ENCODE measurements at regions of chr3 and their contacts with region 1.

Region 1: GRCh38 chr3:42804106-42804830 is at the start of gene HIGD1A:
- DNase-seq: peak; percentile 82 to 93 (median 90)
- ATAC-seq: peak; percentile 100
- H3K4me3 ChIP-seq: peak within 1 kb of the TSS; percentile 91
- H3K4me3 Mint-ChIP-seq: peak within 1 kb of the TSS; percentile 93 to 99 (median 98)
- H3K27ac ChIP-seq: peak within 1 kb of the TSS; percentile 88
- H3K27ac Mint-ChIP-seq: peak within 1 kb of the TSS; percentile 84 to 97 (median 94)
- H3K4me1 ChIP-seq: peaks cover 9 to 16% of the 10 kb centered on the region in 2 donors
- H3K4me1 Mint-ChIP-seq: peaks cover 33 to 60% (median 44%) of the 10 kb centered on the region in 7 donors
- H3K27me3 ChIP-seq: no peaks in the 10 kb centered on the region
- H3K27me3 Mint-ChIP-seq: peaks cover 0 to 36% (median 4%) of the 10 kb centered on the region in 5 donors
- total RNA-seq, gene HIGD1A: 15.3 to 65.9 (median 23.6) TPM

Region 2: GRCh38 chr3:42581709-42582473 is 222.4 kb before region 1 on chr3 and contains the start of gene SEC22C:
- CTCF ChIA-PET with region 1: no interaction called
- POLR2A ChIA-PET with region 1: interaction called, 5 read pairs
- intact Hi-C with region 1: loop called in 1 of 2 experiments (anchors 5 kb)
- DNase-seq: peak; percentile 86 to 95 (median 94)
- ATAC-seq: peak; percentile 94
- H3K4me3 ChIP-seq: peak within 1 kb of the TSS; percentile 86
- H3K4me3 Mint-ChIP-seq: peak within 1 kb of the TSS; percentile 77 to 97 (median 94)
- H3K27ac ChIP-seq: peak within 1 kb of the TSS; percentile 92
- H3K27ac Mint-ChIP-seq: peak within 1 kb of the TSS; percentile 89 to 99 (median 96)
- H3K4me1 ChIP-seq: peaks cover 19 to 25% of the 10 kb centered on the region in 2 donors
- H3K4me1 Mint-ChIP-seq: peaks cover 31 to 60% (median 57%) of the 10 kb centered on the region in 7 donors
- H3K27me3 ChIP-seq: no peaks in the 10 kb centered on the region
- H3K27me3 Mint-ChIP-seq: no peaks in the 10 kb centered on the region
- total RNA-seq, gene SEC22C: 39.7 to 54.8 (median 51.3) TPM

Region 3: GRCh38 chr3:42772670-42773408 is 31.4 kb before region 1 on chr3 and contains the start of gene CCDC13:
- CTCF ChIA-PET with region 1: no interaction called
- POLR2A ChIA-PET with region 1: no interaction called
- intact Hi-C with region 1: loop called (anchors 1 kb)
- DNase-seq: peak; percentile 72 to 88 (median 75)
- ATAC-seq: peak; percentile 91
- H3K4me3 ChIP-seq: peak within 1 kb of the TSS; percentile 70
- H3K4me3 Mint-ChIP-seq: peak within 1 kb of the TSS; percentile 84 to 93 (median 90)
- H3K27ac ChIP-seq: no peak within 1 kb of the TSS
- H3K27ac Mint-ChIP-seq: peak within 1 kb of the TSS in 8 of 9 donors; percentile 13 to 93 (median 87)
- H3K4me1 ChIP-seq: peaks cover 5 to 6% of the 10 kb centered on the region in 2 donors
- H3K4me1 Mint-ChIP-seq: peaks cover 9 to 13% (median 12%) of the 10 kb centered on the region in 7 donors
- H3K27me3 ChIP-seq: no peaks in the 10 kb centered on the region
- H3K27me3 Mint-ChIP-seq: peaks cover 0 to 16% (median 0%) of the 10 kb centered on the region in 5 donors
- total RNA-seq, gene CCDC13: 0.34 to 1.5 (median 0.70) TPM

Region 4: DNA sequence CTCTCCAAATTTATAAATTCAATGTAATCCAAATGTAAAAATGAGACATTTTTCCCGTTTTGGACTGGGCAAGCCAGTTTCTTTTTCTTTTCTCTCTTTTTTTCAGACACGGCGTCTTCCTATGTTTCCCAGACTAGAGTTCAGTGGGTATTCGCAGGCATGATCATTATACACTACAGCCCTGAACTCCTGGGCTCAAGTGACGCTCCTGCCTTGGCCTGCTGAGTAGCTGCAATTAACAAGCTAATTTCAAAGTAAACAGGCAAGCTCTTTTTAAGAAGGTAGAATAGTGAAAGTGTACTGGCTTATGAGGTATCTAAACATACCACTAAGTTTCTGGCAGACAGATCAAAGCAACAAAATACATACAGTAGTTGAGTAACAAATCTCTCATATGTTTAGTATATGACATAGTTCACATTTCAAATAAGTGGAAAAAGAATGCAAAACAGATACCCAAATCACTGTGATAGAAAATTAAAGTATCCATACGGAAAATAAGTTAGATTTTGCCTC is 13.5 kb before region 1 on chr3:
- CTCF ChIA-PET with region 1: no interaction called
- POLR2A ChIA-PET with region 1: interaction called, 5 read pairs
- intact Hi-C with region 1: loop called in 1 of 2 experiments (anchors 2 kb)
- DNase-seq: no peak
- ATAC-seq: no peak
- H3K4me3 ChIP-seq: no peak overlapping the region
- H3K4me3 Mint-ChIP-seq: no peak overlapping the region
- H3K27ac ChIP-seq: no peak overlapping the region
- H3K27ac Mint-ChIP-seq: peak overlapping the region in 1 of 9 donors; percentile 41
- H3K4me1 ChIP-seq: no peaks in the 10 kb centered on the region
- H3K4me1 Mint-ChIP-seq: peaks cover 6 to 27% (median 15%) of the 10 kb centered on the region in 7 donors
- H3K27me3 ChIP-seq: no peaks in the 10 kb centered on the region
- H3K27me3 Mint-ChIP-seq: no peaks in the 10 kb centered on the region

Region 5: GRCh38 chr3:42839616-42840015 is 35.3 kb after region 1 on chr3:
- CTCF ChIA-PET with region 1: no interaction called
- POLR2A ChIA-PET with region 1: no interaction called
- intact Hi-C with region 1: loop called in 1 of 2 experiments (anchors 2 kb)
- DNase-seq: peak in 7 of 9 donors; percentile 19 to 58 (median 51)
- ATAC-seq: peak; percentile 96
- H3K4me3 ChIP-seq: no peak overlapping the region
- H3K4me3 Mint-ChIP-seq: no peak overlapping the region
- H3K27ac ChIP-seq: no peak overlapping the region
- H3K27ac Mint-ChIP-seq: no peak overlapping the region
- H3K4me1 ChIP-seq: no peaks in the 10 kb centered on the region
- H3K4me1 Mint-ChIP-seq: peaks cover 0 to 4% (median 0%) of the 10 kb centered on the region in 7 donors
- H3K27me3 ChIP-seq: no peaks in the 10 kb centered on the region
- H3K27me3 Mint-ChIP-seq: peaks cover 0 to 5% (median 3%) of the 10 kb centered on the region in 5 donors

Region 6: GRCh38 chr3:43132870-43133636 is 328.8 kb after region 1 on chr3:
- CTCF ChIA-PET with region 1: no interaction called
- POLR2A ChIA-PET with region 1: no interaction called
- intact Hi-C with region 1: no loop called
- DNase-seq: no peak
- ATAC-seq: no peak
- H3K4me3 ChIP-seq: no peak overlapping the region
- H3K4me3 Mint-ChIP-seq: no peak overlapping the region
- H3K27ac ChIP-seq: no peak overlapping the region
- H3K27ac Mint-ChIP-seq: no peak overlapping the region
- H3K4me1 ChIP-seq: no peaks in the 10 kb centered on the region
- H3K4me1 Mint-ChIP-seq: no peaks in the 10 kb centered on the region
- H3K27me3 ChIP-seq: no peaks in the 10 kb centered on the region
- H3K27me3 Mint-ChIP-seq: peaks cover 0 to 5% (median 0%) of the 10 kb centered on the region in 5 donors

Region 7: DNA sequence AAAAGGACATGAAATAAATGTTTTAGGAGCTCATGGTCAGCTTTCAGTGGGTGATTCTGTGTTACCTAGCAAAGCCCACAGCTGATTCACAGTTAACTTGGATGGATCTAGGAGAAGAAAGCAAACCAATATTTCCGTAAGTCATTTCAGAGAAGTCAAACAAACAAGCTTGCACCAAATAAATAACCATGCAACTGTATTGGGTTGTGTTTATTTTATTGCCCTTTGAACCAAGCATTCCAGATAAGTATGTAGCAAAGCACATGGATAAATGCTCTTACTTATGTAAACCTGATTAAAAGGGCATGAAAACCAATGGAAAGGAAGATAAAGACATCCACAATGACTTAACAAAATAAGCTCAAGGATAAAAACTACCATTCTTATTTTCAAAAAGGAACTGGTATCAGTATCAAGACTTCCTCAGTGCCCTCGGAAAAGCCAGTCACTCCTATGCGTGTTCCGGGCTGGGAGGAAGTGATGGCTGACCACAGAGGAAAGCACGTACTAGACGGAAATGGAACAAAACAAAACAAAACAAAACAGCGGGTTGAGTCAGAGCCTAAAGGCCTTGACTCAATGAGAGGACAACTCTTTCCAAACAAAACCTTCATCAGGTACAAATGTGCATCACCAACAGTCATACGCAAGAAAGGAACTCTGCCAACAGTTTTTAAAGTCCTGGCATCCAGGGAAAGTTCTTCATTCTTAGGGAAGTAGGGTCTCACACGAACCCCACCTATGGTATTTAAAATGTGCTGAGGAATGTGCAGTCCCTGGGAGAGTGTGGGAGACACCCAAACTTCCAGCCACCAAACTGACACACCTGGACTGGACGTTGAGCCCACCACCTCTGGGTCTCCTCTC is 585.4 kb after region 1 on chr3:
- CTCF ChIA-PET with region 1: no interaction called
- POLR2A ChIA-PET with region 1: no interaction called
- intact Hi-C with region 1: loop called in 1 of 2 experiments (anchors 10 kb)
- DNase-seq: peak in 8 of 9 donors; percentile 58 to 91 (median 85)
- ATAC-seq: peak; percentile 98
- H3K4me3 ChIP-seq: peak overlapping the region; percentile 18
- H3K4me3 Mint-ChIP-seq: peak overlapping the region in 9 of 10 donors; percentile 48 to 81 (median 60)
- H3K27ac ChIP-seq: peak overlapping the region; percentile 50
- H3K27ac Mint-ChIP-seq: peak overlapping the region; percentile 85 to 97 (median 94)
- H3K4me1 ChIP-seq: peaks cover 30 to 39% of the 10 kb centered on the region in 2 donors
- H3K4me1 Mint-ChIP-seq: peaks cover 40 to 83% (median 70%) of the 10 kb centered on the region in 7 donors
- H3K27me3 ChIP-seq: no peaks in the 10 kb centered on the region
- H3K27me3 Mint-ChIP-seq: peaks cover 0 to 12% (median 0%) of the 10 kb centered on the region in 5 donors

Region 8: DNA sequence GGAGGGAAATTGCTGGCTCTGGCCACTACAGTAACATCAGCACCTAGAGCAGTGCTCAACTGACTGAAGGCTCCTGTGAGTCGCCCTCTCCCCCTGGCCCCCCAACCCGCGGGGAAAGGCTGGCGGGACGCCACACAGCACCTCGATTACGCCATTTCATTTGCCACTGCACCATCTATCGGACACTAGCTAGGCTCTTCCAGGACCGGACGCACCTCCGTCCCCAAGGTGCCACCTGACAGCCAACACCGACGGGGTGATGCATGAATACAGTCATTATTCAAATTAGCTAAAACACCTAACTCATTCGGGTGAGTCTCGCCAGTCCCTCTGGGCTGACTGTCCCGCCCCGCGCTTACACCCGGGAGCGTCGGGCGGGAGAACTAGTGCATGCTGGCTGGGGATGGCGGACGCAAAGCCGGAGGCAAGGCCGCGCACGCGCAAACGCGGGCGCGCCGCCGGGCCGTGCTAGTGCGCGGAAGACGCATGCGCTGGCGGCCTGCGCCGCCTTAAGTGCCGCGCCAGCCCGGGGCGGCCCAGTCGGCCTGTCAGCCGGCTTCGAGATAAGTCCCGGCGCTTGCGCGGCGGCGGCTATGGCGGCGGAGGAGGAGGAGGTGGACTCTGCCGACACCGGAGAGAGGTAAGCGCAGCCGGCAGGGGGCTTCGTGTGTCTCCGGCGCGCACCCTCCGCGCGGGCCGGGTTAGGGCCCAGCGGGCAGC is 886.3 kb after region 1 on chr3 and contains the start of gene ABHD5:
- CTCF ChIA-PET with region 1: no interaction called
- POLR2A ChIA-PET with region 1: no interaction called
- intact Hi-C with region 1: loop called in 1 of 2 experiments (anchors 2 kb)
- DNase-seq: peak; percentile 94 to 99 (median 96)
- ATAC-seq: peak; percentile 96
- H3K4me3 ChIP-seq: peak within 1 kb of the TSS; percentile 74
- H3K4me3 Mint-ChIP-seq: peak within 1 kb of the TSS; percentile 91 to 98 (median 94)
- H3K27ac ChIP-seq: peak within 1 kb of the TSS; percentile 85
- H3K27ac Mint-ChIP-seq: peak within 1 kb of the TSS; percentile 90 to 97 (median 92)
- H3K4me1 ChIP-seq: peaks cover 8% of the 10 kb centered on the region in 2 donors
- H3K4me1 Mint-ChIP-seq: peaks cover 11 to 47% (median 37%) of the 10 kb centered on the region in 7 donors
- H3K27me3 ChIP-seq: no peaks in the 10 kb centered on the region
- H3K27me3 Mint-ChIP-seq: peaks cover 0 to 6% (median 0%) of the 10 kb centered on the region in 5 donors
- total RNA-seq, gene ABHD5: 6.1 to 21.0 (median 12.1) TPM